Activated T-helper 2 cell treated with anti-CD3 and anti-CD28 coated beads, Interferon-gamma antibody, Interleukin-2, Interleukin-4, amounts not matched to agents 10 μg/mL and 5 μg/mL and 100 μg/mL, durations not matched to agents 14 hours and 24 hours and 36 hours (primary cell): ENCODE measurements at regions of chrX and their contacts with region 1.

Region 1: GRCh38 chrX:70289793-70290776 is at the starts of genes KIF4A and PDZD11:
- DNase-seq: peak; percentile 83
- H3K4me3 Mint-ChIP-seq: peak within 1 kb of the TSS; percentile 93
- H3K27ac Mint-ChIP-seq: peak within 1 kb of the TSS; percentile 85
- H3K4me1 Mint-ChIP-seq: peaks cover 23% of the 10 kb centered on the region
- H3K27me3 Mint-ChIP-seq: no peaks in the 10 kb centered on the region
- total RNA-seq, gene KIF4A: 24.4 and 26.5 TPM in 2 replicates
- total RNA-seq, gene PDZD11: 27.7 and 31.4 TPM in 2 replicates

Region 2: GRCh38 chrX:70133303-70134115 is 156.6 kb before region 1 on chrX and contains the start of gene IGBP1:
- intact Hi-C with region 1: loop called (anchors 1 kb)
- DNase-seq: peak; percentile 76
- H3K4me3 Mint-ChIP-seq: peak within 1 kb of the TSS; percentile 98
- H3K27ac Mint-ChIP-seq: peak within 1 kb of the TSS; percentile 91
- H3K4me1 Mint-ChIP-seq: peaks cover 20% of the 10 kb centered on the region
- H3K27me3 Mint-ChIP-seq: no peaks in the 10 kb centered on the region
- total RNA-seq, gene IGBP1: 33.0 and 33.6 TPM in 2 replicates

Region 3: GRCh38 chrX:70301716-70302115 is 11.6 kb after region 1 on chrX:
- intact Hi-C with region 1: no loop called
- DNase-seq: no peak
- H3K4me3 Mint-ChIP-seq: no peak overlapping the region
- H3K27ac Mint-ChIP-seq: peak overlapping the region; percentile 33
- H3K4me1 Mint-ChIP-seq: peaks cover 19% of the 10 kb centered on the region
- H3K27me3 Mint-ChIP-seq: no peaks in the 10 kb centered on the region

Region 4: DNA sequence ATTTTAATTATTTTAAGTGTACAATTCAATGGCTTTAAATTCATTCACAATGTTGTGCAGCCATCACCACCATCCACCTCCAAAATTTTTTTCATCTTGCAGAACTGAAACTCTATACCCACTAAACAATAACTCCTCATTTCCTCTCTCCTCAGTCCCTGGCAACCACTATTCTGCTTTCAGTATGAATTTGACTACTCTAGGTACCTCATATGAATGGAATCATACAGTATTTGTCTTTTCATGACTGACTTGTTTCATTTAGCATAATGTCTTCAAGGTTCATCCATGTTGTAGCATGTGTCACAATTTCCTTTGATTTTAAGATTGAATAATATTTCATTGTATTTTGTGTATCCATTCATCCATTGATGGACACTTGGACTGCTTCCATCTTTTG is 46.7 kb after region 1 on chrX:
- intact Hi-C with region 1: loop called (anchors 2 kb)
- DNase-seq: no peak
- H3K4me3 Mint-ChIP-seq: no peak overlapping the region
- H3K27ac Mint-ChIP-seq: peak overlapping the region; percentile 62
- H3K4me1 Mint-ChIP-seq: peaks cover 13% of the 10 kb centered on the region
- H3K27me3 Mint-ChIP-seq: no peaks in the 10 kb centered on the region